HCT116 (cell line): ENCODE measurements at regions of chr19 and their contacts with region 1.

Region 1: GRCh38 chr19:45615795-45616708 is 14.0 kb upstream of the GPR4 start:
- DNase-seq: peak; percentile 97
- ATAC-seq: peak; percentile 88
- H3K4me3 ChIP-seq: peak overlapping the region; percentile 43 to 52
- H3K27ac ChIP-seq: peak overlapping the region; percentile 98
- H3K4me1 ChIP-seq: peaks cover 30 to 38% of the 10 kb centered on the region in 2 experiments
- H3K27me3 ChIP-seq: no peaks in the 10 kb centered on the region
- CTCF ChIP-seq: no peak
- POLR2A ChIP-seq: peak; percentile 66
- RAD21 ChIP-seq: no peak

Region 2: GRCh38 chr19:45323671-45324081 is 292.4 kb before region 1 on chr19:
- CTCF ChIA-PET with region 1: no interaction called
- POLR2A ChIA-PET with region 1: no interaction called
- RAD21 ChIA-PET with region 1: no interaction called
- intact Hi-C with region 1: no loop called
- DNase-seq: no peak
- ATAC-seq: no peak
- H3K4me3 ChIP-seq: no peak overlapping the region
- H3K27ac ChIP-seq: no peak overlapping the region
- H3K4me1 ChIP-seq: peaks cover 23 to 29% of the 10 kb centered on the region in 2 experiments
- H3K27me3 ChIP-seq: no peaks in the 10 kb centered on the region
- CTCF ChIP-seq: no peak
- POLR2A ChIP-seq: no peak
- RAD21 ChIP-seq: no peak

Region 3: DNA sequence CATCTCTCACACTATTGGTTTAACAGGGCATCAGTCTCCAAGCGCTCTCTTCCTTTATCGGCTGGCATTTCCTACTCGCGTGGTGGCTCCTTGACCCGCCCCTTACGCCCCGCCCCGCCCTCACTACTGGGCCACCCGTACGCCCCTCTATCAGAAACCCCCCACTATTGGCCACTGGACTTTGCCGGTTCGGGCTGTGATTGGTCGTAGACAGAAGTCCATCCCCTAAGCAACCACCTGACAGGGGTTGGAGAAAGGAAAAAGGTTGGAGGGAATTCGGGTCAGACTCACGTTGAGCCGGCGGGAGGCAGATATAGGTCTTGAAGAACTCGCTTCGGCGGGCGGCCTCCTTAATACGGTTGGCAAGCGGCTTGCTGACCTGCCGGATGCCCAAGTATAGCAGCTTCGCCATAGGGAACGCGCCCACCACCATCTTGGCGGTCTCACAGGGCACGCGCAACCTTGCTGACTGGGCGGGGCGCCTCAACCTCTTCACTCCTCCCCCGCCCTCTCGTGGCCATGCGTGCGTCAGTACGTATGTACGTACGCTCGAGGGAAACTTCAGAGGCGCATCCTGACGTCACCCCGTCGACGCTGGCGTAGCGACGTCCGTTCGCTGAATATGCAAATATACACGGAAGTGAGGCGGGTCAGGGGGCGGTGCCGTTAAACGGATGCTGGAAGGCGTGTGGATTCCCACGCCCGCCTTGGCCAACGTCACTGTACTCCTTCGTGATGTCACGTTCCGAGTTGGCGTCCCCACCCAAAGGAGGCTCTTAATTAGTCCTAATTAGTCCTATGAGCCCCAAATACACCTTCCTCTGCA is 31.5 kb before region 1 on chr19 and contains the start of gene OPA3:
- CTCF ChIA-PET with region 1: no interaction called
- POLR2A ChIA-PET with region 1: interaction called, 14 read pairs
- RAD21 ChIA-PET with region 1: no interaction called
- intact Hi-C with region 1: no loop called
- DNase-seq: peak; percentile 100
- ATAC-seq: peak; percentile 93
- H3K4me3 ChIP-seq: peak within 1 kb of the TSS; percentile 72 to 97
- H3K27ac ChIP-seq: peak within 1 kb of the TSS; percentile 79
- H3K4me1 ChIP-seq: peaks cover 6 to 7% of the 10 kb centered on the region in 2 experiments; a peak in 3 of 4 replicates
- H3K27me3 ChIP-seq: no peaks in the 10 kb centered on the region
- CTCF ChIP-seq: no peak
- POLR2A ChIP-seq: peak; percentile 30
- RAD21 ChIP-seq: no peak
- total RNA-seq, gene OPA3: 11.1 TPM

Region 4: DNA sequence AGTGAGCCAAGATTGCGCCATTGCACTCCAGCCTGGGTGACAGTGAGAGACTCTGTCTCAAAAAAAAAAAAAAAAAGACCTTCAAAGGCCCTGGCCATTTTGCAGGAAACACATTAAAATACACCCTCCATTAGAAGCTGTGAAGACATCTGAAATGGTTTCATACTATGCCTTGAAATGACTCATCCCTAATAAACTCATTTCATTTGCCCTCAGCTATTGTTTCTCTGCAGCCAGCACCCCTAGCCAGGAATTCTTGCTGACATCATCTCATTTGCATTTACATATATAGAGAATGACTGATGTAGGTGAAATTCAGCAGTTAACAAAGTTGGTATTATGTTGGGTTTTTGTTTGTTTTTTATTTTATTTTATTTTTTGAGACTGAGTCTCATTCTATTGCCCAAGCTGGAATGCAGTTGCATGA is 14.5 kb after region 1 on chr19:
- CTCF ChIA-PET with region 1: interaction called, 4 read pairs
- POLR2A ChIA-PET with region 1: interaction called, 14 read pairs
- RAD21 ChIA-PET with region 1: no interaction called
- intact Hi-C with region 1: loop called (anchors 2 kb)
- DNase-seq: peak; percentile 67
- ATAC-seq: peak; percentile 61
- H3K4me3 ChIP-seq: no peak overlapping the region
- H3K27ac ChIP-seq: peak overlapping the region; percentile 69
- H3K4me1 ChIP-seq: peaks cover 32 to 47% of the 10 kb centered on the region in 2 experiments
- H3K27me3 ChIP-seq: no peaks in the 10 kb centered on the region
- CTCF ChIP-seq: no peak
- POLR2A ChIP-seq: no peak
- RAD21 ChIP-seq: no peak

Region 5: DNA sequence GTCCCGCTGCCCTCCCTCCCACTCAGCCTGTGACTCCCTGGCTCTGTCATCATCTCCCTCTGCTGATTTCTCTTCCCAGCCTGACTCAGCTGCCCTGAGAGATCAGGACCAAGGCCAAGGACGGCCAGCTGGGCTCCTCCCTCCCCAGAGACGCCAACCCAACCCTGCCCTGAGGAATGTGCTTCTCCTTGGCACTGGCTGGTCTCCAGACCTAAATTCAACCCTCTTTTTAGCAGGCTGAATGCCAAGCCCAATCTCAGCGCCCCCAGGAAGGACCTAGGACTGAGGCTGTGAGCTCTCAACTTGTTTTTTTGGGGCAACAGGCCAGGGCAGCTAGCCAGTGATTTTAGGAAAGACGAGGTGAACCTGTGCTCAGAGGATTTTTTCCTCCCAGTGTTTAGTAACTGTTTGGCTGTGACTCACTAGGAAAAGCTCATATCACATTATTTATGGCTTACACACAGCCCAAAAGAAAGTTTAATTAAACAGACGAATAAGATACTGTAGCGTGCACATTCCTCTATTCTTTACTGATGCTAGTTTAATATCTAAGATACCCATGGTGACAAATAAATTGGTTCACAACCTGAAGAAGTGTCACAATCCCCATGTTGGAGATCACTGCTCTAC is 606.0 kb after region 1 on chr19:
- CTCF ChIA-PET with region 1: no interaction called
- POLR2A ChIA-PET with region 1: no interaction called
- RAD21 ChIA-PET with region 1: no interaction called
- intact Hi-C with region 1: no loop called
- DNase-seq: no peak
- ATAC-seq: peak; percentile 38; the same call in 1 of the 2 replicates
- H3K4me3 ChIP-seq: no peak overlapping the region
- H3K27ac ChIP-seq: no peak overlapping the region
- H3K4me1 ChIP-seq: no peaks in the 10 kb centered on the region
- H3K27me3 ChIP-seq: peaks cover 69% of the 10 kb centered on the region
- CTCF ChIP-seq: no peak
- POLR2A ChIP-seq: no peak
- RAD21 ChIP-seq: no peak